A549 (cell line): ENCODE measurements at regions of chr1 and their contacts with region 1.

Region 1: DNA sequence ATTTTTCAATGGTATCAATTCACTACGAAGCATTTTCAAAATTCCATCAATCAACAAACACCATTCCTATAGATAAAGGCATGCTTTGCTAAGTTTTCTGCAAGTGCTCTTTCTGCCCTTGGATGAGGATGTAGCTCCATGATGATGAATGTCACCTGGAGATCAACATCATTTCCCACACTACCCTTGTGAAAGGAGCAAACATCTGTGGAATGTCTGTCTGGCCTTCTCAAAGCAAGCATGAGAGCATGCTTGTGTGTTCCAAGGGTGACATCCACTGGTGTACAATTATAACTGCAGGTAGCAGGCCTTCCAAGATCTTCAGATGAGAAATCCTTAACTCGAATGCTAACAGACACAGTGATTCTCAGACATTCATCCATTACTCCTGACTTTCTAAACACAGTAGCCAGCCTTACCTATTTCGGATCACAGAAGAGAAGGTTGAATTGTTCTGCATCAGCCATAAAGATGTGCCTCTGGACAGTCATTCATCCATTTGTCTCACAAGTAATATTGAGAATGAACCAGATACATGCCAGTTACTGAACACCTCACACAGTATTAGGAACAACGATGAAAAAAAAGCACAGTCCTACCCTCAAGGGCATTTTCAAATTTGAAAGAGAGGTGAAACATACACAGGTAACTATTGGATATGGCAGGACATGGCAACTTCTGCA is 162.4 kb downstream of the TPR start:
- DNase-seq: peak; percentile 72 to 92
- ATAC-seq: peak; percentile 97 to 99
- H3K4me3 ChIP-seq: no peak overlapping the region
- H3K27ac ChIP-seq: no peak overlapping the region
- H3K4me1 ChIP-seq: no peaks in the 10 kb centered on the region; the same call in 2 of the 3 replicates
- CTCF ChIP-seq: peak; percentile 96
- EP300 ChIP-seq: no peak
- POLR2A ChIP-seq: no peak
- RAD21 ChIP-seq: peak; percentile 98 to 99

Region 2: DNA sequence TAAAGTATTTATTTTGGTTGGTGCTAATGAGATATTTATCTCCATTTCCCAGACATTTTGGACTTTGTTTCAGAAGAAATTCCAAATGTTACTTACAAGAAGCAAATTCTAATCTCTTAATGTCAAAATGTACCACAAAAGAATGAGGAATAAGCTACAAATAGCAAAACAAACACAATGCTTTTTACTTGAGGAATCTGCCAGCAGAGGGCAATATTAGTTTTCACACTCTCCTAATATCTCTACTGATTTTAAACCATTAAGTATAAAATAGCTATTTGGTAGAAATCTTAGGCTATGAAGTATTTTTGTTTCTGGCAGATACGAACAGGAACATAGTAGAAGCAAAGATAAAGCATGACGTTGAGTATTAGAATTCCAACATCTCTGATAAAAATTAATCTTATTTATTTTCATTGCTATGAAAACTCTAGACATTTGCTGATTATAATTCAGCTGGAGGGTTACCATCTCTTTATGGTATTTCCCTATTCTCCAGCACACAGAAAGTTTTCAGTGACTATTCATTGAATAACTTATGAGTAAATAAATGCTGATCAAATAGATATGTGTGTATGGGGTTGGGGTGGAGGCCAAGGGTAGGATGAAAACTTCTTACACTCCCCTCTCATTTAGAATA is 491.9 kb before region 1 on chr1:
- CTCF ChIA-PET with region 1: interaction called, 13 read pairs
- POLR2A ChIA-PET with region 1: no interaction called
- DNase-seq: peak in 1 of 2 experiments; percentile 46
- ATAC-seq: peak; percentile 54 to 75; a peak in 3 of 6 replicates
- H3K4me3 ChIP-seq: no peak overlapping the region
- H3K27ac ChIP-seq: no peak overlapping the region
- H3K4me1 ChIP-seq: peaks cover 8% of the 10 kb centered on the region; the same call in 2 of the 3 replicates
- CTCF ChIP-seq: peak; percentile 70
- EP300 ChIP-seq: no peak
- POLR2A ChIP-seq: no peak
- RAD21 ChIP-seq: peak; percentile 61 to 63

Region 3: DNA sequence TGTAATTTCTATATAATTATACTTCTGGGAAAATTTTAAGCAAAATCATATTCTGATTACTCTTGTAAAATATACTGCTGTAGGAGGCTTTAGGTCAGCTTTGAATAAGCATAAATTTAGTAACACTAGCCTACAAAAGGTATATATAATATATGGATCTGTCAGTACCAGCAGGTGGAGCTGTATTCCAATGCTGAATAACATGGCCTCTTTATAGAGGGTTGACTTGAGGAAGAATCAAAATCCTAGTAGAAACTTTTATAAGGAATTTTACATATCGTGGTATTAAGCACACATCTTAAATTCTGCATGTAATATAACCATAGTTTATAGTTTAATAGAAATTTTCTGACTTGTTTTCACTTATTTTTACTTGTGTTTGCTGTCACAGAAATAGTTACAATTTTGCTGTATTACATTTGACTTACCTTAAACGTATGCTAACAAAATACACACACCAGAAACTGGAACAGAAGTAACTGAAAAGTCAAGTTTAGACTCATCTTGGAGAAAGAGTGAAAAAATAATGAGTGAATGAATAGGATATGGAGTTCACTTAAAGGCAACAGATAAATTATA is 399.2 kb before region 1 on chr1:
- CTCF ChIA-PET with region 1: interaction called, 10 read pairs
- POLR2A ChIA-PET with region 1: no interaction called
- DNase-seq: peak; percentile 5 to 63
- ATAC-seq: peak; percentile 82 to 89
- H3K4me3 ChIP-seq: no peak overlapping the region
- H3K27ac ChIP-seq: no peak overlapping the region
- H3K4me1 ChIP-seq: no peaks in the 10 kb centered on the region
- CTCF ChIP-seq: peak; percentile 77
- EP300 ChIP-seq: no peak
- POLR2A ChIP-seq: no peak
- RAD21 ChIP-seq: peak; percentile 77

Region 4: GRCh38 chr1:186155594-186155993 is 57.1 kb before region 1 on chr1:
- CTCF ChIA-PET with region 1: interaction called, 17 read pairs
- POLR2A ChIA-PET with region 1: no interaction called
- DNase-seq: peak; percentile 38 to 69
- ATAC-seq: peak; percentile 91
- H3K4me3 ChIP-seq: no peak overlapping the region
- H3K27ac ChIP-seq: no peak overlapping the region
- H3K4me1 ChIP-seq: peaks cover 16% of the 10 kb centered on the region
- CTCF ChIP-seq: peak; percentile 70
- EP300 ChIP-seq: no peak
- POLR2A ChIP-seq: no peak
- RAD21 ChIP-seq: peak; percentile 81 to 91

Region 5: DNA sequence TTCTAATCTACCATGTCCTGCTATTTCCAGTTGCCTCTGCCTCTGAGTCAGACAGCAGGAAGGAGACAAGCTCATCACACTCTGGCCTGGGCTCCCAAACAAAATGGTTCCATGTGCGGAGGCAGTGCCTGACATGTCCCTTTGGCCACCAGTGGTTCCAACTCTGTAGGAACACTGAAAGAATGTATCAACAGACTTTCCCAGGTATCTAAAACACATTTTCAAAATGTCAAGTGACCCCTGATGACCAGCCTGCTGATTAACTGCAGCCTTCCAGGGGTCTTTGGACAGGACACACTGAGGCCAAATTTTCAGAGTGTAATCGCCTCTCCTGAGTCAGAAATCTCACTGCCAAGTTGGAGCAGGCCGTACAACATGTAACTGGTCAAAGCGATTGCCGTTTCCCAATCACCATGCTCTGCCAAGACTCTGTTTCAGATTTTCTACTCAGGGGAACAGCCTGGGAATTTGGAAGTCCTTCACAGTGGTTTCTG is 10.4 kb before region 1 on chr1:
- CTCF ChIA-PET with region 1: interaction called, 16 read pairs
- POLR2A ChIA-PET with region 1: no interaction called
- DNase-seq: no peak
- ATAC-seq: no peak
- H3K4me3 ChIP-seq: no peak overlapping the region
- H3K27ac ChIP-seq: no peak overlapping the region
- H3K4me1 ChIP-seq: no peaks in the 10 kb centered on the region
- CTCF ChIP-seq: no peak
- EP300 ChIP-seq: no peak
- POLR2A ChIP-seq: no peak
- RAD21 ChIP-seq: no peak

Region 6: DNA sequence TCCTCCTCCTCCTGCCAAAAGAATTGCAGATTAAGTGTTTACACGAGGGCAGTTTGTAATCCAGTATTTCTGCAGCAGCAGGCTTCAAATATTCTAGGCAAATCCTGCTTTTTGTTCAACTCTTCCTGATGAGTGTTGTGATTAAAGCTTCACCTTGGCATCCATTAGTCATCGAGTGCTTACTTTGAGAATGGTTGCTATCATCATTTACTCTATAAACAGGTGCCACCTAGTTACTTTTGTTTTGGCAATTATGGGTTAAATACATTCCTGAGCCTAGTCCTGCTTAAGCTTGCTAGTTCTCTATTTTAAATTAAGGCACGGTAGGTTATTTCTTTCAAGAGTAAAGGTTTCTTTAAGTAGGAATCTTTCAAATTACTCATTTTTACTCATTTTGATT is 227.9 kb after region 1 on chr1:
- CTCF ChIA-PET with region 1: no interaction called
- POLR2A ChIA-PET with region 1: no interaction called
- DNase-seq: peak; percentile 5 to 53
- ATAC-seq: peak in 1 of 2 experiments; percentile 48; a peak in 2 of 6 replicates
- H3K4me3 ChIP-seq: no peak overlapping the region
- H3K27ac ChIP-seq: no peak overlapping the region; a peak in 1 of 6 replicates
- H3K4me1 ChIP-seq: peaks cover 28% of the 10 kb centered on the region
- CTCF ChIP-seq: no peak
- EP300 ChIP-seq: no peak
- POLR2A ChIP-seq: no peak
- RAD21 ChIP-seq: no peak